ENCODE measurements at regions of chr9 and their contacts with region 1.

Region 1: DNA sequence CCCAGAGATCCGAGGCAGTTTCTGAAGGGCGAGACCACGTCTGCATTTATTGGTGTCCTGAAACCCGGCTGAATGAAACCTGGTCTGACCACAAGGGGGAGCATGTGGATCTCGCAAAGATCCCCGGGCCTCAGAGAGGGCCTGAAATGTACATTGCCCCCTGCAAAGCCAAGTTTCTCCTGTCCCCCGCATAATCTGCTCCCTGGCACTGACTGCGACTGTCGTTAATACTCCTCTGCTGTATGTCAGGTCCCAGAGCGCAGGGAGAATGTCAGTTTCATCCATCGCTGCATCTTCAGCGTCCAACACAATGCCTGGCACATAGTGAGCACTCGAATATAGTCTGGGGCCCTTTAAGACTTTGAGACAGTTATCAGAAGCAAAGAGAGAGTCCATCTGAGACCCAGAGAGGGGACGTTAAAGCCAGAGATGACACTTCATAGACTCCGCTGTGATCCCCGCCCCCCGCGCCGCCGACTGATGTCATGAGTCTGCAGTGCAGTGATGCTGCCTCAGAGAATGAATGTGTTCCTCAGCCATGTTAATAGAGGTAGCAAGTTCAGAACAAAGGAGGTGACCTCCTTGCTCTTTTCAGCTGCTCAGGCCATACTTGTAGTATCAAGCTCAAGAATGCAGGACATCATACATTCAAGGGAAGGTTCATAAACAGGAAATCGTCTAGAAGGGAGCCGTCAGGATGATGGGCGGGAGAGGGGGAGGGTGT is 74.5 kb upstream of the BARHL1 start:
- DNase-seq: peak; percentile 50
- H3K4me3 ChIP-seq: no peak overlapping the region
- H3K27ac ChIP-seq: no peak overlapping the region
- H3K4me1 ChIP-seq: no peaks in the 10 kb centered on the region
- H3K27me3 ChIP-seq: peaks cover 46% of the 10 kb centered on the region
- CTCF ChIP-seq: peak; percentile 83

Region 2: DNA sequence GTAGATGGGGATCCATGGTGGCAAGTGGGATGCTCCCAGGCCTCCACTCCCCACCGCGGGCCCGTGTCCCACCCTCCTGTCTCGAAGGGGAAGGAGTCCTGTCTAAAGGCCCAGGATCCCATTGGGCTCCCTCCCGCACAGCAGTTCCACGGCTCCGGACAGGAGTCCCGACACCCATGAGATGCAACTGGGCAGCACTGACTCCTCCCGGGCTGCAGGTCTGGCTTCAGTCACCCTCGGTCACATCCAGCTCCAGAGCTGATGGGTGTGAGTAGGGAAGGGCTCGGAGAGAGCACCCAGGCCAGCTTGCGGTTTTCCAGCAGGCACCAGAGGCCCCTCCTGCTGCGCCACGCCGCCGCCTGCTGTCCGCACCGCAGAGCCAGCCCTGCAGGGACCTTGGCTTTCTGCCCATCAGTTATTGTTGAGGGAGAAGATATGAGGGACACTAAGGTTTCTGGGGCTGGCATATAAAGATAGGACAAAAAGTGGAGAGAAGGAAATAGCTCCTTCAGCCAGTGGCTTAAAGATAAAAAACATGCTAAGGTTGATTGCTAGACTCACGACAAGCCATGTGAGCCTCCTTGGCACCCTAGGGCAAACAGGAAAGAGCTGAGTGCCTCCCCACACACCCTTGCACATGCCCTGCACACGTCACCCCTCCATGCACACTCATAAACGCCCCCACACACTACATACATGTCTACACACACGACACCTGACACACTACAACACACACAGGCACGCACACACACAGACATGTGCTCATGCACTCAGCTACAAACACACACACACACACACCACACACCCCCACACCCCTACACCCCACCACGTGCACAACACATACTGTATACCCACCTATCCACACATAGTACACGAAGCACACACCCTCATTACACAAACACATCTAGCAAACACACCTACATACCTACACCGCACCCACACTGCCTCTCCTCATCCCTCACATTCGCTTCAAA is 291.2 kb after region 1 on chr9:
- intact Hi-C with region 1: loop called (anchors 5 kb)
- DNase-seq: no peak
- H3K4me3 ChIP-seq: no peak overlapping the region
- H3K27ac ChIP-seq: peak overlapping the region; percentile 64
- H3K4me1 ChIP-seq: peaks cover 27% of the 10 kb centered on the region
- H3K27me3 ChIP-seq: peaks cover 33% of the 10 kb centered on the region
- CTCF ChIP-seq: no peak

Measured in left ventricle myocardium inferior (tissue), 1 donor.